ENCODE measurements at regions of chr3 and their contacts with region 1.

Region 1: DNA sequence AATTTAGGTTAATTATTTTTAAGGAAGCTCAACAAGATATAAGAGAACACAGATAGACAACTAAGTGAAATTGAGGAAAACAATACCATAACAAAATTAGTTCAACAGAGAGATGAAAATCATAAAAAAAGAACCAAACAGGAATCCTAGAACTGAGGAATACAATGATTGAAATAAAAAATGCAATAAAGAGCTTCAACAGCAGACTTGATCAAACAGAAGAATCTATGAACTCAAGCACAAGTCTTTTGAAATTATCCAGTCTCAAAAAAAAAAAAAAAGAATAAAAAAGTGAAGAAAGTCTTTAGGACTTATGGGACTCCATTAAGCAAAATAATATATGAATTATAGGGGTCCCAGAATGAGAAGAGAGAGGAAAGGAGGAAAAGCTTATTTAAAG is 42.0 kb upstream of the GNB4 start:
- DNase-seq: no peak
- ATAC-seq: no peak
- H3K4me3 ChIP-seq: no peak overlapping the region
- H3K27ac ChIP-seq: no peak overlapping the region
- H3K4me1 ChIP-seq: no peaks in the 10 kb centered on the region
- H3K27me3 ChIP-seq: no peaks in the 10 kb centered on the region
- CTCF ChIP-seq: no peak

Region 2: GRCh38 chr3:178568155-178568731 is 925.0 kb before region 1 on chr3:
- intact Hi-C with region 1: no loop called
- DNase-seq: no peak
- ATAC-seq: no peak
- H3K4me3 ChIP-seq: no peak overlapping the region
- H3K27ac ChIP-seq: no peak overlapping the region
- H3K4me1 ChIP-seq: no peaks in the 10 kb centered on the region
- H3K27me3 ChIP-seq: no peaks in the 10 kb centered on the region
- CTCF ChIP-seq: no peak

Region 3: GRCh38 chr3:180762875-180763274 is 1269.6 kb after region 1 on chr3:
- intact Hi-C with region 1: loop called in 1 of 2 experiments (anchors 5 kb)
- DNase-seq: no peak
- ATAC-seq: no peak
- H3K4me3 ChIP-seq: no peak overlapping the region
- H3K27ac ChIP-seq: no peak overlapping the region
- H3K4me1 ChIP-seq: no peaks in the 10 kb centered on the region
- H3K27me3 ChIP-seq: no peaks in the 10 kb centered on the region
- CTCF ChIP-seq: no peak

Measured in psoas muscle (tissue), 8 donors.